Aorta (tissue), 5 donors: ENCODE measurements at regions of chr12 and their contacts with region 1.

Region 1: DNA sequence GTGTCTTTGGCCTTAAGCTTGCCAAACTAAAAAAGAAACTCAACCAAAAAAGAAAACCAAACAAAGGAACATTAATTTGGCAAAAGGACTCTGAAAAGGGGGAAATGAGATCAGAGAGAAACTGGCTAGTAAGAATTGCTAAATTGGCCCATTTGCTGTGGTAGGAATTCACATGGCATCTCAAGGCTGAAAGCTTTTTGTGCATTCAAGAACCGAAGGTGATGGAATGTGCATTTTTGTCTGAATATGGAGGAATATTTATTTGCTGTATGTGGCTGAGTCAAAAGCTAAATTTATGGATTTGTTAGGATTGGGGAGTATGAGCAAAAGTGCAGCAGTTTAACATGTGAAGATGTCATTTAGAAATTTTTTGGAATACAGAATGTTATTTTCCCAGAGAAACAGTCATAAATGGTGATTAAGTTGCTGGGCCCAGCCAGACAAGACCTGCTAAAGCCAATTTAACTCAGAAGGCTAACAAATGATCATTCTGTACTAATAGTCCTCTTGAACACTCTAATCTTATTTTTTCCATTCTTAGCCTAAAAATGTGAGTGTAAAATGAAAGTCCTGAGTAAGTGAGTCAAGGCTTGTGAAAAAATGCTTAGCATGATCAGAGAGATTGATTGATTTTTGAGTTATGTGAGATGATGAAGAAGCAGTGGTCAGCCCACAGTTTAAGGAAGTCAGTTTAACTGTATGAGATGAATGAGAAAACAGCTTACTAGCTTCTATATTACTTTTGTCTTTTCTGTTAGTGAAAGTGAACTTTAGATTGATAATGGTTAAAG is 94.1 kb downstream of the ANO6 start:
- DNase-seq: no peak
- ATAC-seq: peak; percentile 22
- H3K4me3 ChIP-seq: no peak overlapping the region
- H3K27ac ChIP-seq: peak overlapping the region; percentile 8 to 90
- H3K4me1 ChIP-seq: peaks cover 11 to 16% of the 10 kb centered on the region in 2 donors
- H3K27me3 ChIP-seq: no peaks in the 10 kb centered on the region

Region 2: DNA sequence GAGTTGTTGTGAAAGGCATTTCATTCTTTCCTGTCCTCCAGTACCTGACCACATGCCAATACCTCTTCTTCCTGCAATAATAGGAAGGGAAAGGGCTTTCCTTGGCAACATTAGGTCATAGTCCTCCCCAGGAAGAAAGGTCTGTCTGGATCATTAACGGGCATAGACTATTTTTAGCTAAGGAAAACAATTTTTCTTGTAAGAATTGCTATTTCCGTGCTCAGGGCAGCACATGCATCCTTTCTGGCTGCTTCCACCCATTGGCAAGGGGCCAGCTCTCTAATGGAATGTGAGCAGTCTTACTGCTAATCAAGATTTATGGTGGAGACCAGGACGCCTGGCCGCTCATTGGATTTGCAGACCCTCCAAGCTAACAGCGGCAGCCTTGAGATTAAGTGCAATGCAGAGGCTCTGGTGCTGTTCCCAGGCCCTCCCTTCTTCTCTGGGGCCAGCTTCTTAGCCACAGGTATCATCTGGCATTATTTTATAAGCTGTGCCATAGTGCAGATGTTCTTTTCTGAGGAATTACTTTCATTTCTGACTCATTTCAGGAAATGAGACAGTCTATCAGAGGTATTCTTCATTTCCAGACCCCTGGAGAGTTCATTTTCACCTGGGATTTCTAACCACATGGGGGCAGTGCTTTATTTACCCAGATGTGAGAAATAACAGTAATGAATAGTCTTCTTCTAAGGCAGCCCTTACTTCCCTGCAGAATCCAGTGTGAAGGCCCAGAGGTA is 41.2 kb before region 1 on chr12:
- intact Hi-C with region 1: loop called (anchors 1 to 5 kb)
- DNase-seq: peak; percentile 94 to 95
- ATAC-seq: peak; percentile 74
- H3K4me3 ChIP-seq: no peak overlapping the region
- H3K27ac ChIP-seq: peak overlapping the region; percentile 80 to 82
- H3K4me1 ChIP-seq: peaks cover 4 to 24% of the 10 kb centered on the region in 2 donors
- H3K27me3 ChIP-seq: no peaks in the 10 kb centered on the region

Region 3: GRCh38 chr12:45357539-45358417 is 47.7 kb after region 1 on chr12:
- intact Hi-C with region 1: loop called in 1 of 2 experiments (anchors 5 kb)
- DNase-seq: peak in 1 of 2 donors; percentile 53
- ATAC-seq: peak; percentile 71
- H3K4me3 ChIP-seq: no peak overlapping the region
- H3K27ac ChIP-seq: peak overlapping the region in 1 of 2 donors; percentile 21
- H3K4me1 ChIP-seq: peaks cover 2 to 12% of the 10 kb centered on the region in 2 donors
- H3K27me3 ChIP-seq: no peaks in the 10 kb centered on the region

Region 4: DNA sequence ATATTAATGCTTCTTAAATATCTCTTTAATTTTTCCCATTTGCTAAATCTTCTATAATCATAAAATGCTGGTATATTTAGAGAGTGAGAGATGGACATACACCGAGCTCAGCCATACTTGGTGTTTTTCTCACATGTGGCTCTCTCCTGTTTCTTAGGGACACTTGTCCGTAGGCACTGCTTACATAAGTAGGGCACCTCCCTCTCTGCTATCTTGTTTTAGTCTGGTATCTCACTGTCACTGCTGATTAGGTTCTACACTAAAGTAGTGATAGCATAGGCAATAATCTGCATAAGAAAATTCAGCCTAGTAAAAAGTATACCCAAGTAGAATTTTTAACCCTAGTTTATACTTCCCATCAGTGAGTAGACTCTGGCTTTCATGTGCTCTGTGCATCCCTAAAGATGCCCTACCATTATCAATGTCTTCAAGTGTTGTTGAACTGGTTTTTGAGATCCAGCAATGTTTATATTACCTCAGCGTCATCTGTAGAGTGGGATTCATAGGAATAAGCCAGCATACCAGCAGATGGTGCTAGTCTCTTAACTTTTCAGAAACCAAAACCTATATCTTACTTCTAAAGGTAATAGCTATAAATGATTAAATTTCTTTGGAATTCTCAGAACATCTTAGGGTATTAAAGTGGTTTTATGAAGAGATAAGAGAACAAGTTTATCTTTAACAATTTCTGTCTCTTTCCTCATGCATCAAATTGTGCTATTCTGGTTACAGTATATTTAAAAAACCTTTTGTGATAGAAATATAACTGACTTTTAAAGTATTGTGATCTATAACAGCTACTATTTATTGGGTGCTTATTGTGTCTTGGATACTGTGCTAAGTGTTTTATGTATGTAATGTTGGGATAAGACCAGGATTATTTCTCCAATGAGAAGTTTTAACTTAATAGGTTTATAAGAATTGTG is 452.4 kb after region 1 on chr12:
- intact Hi-C with region 1: no loop called
- DNase-seq: no peak
- ATAC-seq: peak; percentile 11
- H3K4me3 ChIP-seq: no peak overlapping the region
- H3K27ac ChIP-seq: no peak overlapping the region
- H3K4me1 ChIP-seq: peaks cover 0 to 1% of the 10 kb centered on the region in 2 donors
- H3K27me3 ChIP-seq: no peaks in the 10 kb centered on the region